Head of caudate nucleus (tissue), 42 donors: ENCODE measurements at regions of chrX and their contacts with region 1.

Region 1: DNA sequence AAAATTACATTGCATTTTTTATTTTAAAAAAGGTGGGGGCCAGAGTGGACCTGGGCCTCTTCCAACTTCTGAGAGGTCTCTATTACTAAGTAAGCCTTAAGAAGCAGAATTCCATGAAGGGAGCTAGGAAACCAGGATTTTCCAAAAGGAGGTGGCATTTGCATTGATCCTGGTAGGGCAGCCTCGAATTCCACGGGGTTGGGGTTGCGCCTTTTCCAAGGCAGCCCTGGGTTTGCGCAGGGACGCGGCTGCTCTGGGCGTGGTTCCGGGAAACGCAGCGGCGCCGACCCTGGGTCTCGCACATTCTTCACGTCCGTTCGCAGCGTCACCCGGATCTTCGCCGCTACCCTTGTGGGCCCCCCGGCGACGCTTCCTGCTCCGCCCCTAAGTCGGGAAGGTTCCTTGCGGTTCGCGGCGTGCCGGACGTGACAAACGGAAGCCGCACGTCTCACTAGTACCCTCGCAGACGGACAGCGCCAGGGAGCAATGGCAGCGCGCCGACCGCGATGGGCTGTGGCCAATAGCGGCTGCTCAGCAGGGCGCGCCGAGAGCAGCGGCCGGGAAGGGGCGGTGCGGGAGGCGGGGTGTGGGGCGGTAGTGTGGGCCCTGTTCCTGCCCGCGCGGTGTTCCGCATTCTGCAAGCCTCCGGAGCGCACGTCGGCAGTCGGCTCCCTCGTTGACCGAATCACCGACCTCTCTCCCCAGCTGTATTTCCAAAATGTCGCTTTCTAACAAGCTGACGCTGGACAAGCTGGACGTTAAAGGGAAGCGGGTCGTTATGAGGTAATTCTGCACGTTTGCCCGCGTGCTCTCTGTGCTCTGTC is at the start of gene PGK1:
- DNase-seq: peak; percentile 89 to 97 (median 94)

Region 2: DNA sequence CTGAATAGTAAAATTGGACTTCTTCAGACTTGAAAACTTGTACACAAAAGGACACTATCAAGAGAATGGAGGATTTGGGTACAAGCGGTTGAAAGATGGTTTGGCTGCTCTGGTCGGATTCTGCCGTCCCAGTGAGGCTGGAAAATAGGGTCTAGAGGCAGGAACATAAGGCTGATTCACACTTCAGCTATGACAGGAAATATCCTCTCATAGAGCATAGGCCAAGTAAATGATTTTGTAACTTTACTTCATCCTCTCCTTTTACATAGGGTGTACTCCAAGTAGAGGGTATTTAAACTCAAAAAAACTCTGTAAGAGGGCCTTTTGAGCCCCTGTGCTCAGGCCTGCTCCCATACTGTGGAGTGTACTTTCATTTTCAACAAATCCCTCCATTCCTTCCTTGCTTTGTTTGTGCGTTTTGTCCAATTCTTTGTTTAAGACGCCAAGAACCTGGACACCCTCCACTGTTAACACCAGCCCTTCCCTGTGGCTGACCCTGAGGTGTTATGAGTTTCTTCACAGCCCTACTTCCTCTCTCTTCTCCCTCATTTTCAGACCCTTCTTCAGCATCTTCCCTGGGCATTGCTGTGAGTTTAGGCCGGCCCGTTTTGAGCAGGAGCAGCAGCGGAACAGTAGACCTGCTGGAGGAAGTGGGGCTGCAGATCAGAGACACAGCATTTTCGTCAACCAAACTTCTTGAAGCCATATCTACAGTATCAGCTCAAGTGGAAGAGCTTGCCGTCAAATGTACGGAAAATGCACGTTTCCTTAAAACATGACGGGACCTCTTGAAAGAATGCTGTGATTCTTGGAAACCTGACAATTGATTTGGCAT is 141.6 kb before region 1 on chrX:
- intact Hi-C with region 1: no loop called
- DNase-seq: no peak

Region 3: GRCh38 chrX:78139160-78140123 is 35.6 kb after region 1 on chrX and contains the start of gene TAF9B:
- intact Hi-C with region 1: loop called (anchors 2 kb)
- DNase-seq: peak; percentile 67 to 94 (median 87)